ENCODE measurements at regions of chr4 and their contacts with region 1.

Region 1: GRCh38 chr4:25913851-25914669 is at the start of gene SMIM20:
- DNase-seq: peak; percentile 69 to 96
- H3K4me3 ChIP-seq: peak within 1 kb of the TSS; percentile 70 to 74
- H3K27ac ChIP-seq: peak within 1 kb of the TSS; percentile 83 to 84
- H3K4me1 ChIP-seq: peaks cover 0 to 9% of the 10 kb centered on the region in 2 donors
- H3K27me3 ChIP-seq: no peaks in the 10 kb centered on the region
- CTCF ChIP-seq: no peak
- total RNA-seq, gene SMIM20: 5.7 TPM

Region 2: DNA sequence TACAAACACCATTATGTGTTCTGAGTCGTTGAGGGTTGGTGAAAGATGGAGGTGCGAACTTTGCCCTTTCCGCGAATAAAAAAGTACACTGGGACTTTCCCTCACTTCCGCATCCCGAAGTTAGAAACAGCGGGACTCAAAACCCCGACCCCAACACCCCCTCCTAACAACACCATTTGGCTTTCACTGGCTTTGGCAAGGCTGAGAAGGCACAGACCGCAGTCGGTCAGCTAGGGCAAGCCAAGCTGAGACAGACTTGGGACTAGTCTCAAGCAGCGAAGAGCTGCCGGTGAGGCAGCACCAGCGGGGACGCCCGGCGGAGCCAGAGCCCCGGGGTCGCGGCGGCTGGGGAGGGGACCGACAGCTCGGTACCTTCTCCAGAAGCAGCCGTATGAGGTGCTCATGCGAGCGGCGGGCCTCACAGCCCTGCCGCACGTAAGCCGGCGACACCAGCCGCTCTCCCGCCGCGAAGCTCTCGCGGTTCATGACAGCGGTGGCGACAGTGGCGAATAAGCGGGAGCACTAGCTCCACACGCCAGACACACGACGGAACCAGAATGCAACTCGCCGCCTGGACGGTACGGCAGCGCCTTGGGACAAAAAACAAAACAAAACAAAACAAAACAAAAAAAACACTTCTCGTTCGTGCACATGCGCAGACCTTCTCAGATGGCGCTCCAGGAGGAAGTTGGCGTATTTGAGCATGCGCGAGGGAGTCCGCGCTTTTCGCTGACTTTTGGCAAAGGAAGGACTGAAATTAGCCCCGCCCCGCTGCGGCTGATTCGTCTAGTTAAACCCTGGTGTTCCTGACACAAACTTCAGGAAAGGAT is 754.0 kb before region 1 on chr4 and contains the start of gene SEPSECS:
- intact Hi-C with region 1: loop called (anchors 10 kb)
- DNase-seq: peak; percentile 90 to 98
- H3K4me3 ChIP-seq: peak within 1 kb of the TSS; percentile 76 to 86
- H3K27ac ChIP-seq: peak within 1 kb of the TSS; percentile 95 to 97
- H3K4me1 ChIP-seq: peaks cover 3 to 15% of the 10 kb centered on the region in 2 donors
- H3K27me3 ChIP-seq: no peaks in the 10 kb centered on the region
- CTCF ChIP-seq: no peak
- total RNA-seq, gene SEPSECS: 5.2 TPM

Region 3: GRCh38 chr4:25376754-25377571 is 537.1 kb before region 1 on chr4 and contains the start of gene ANAPC4:
- intact Hi-C with region 1: loop called (anchors 2 kb)
- DNase-seq: peak; percentile 83 to 95
- H3K4me3 ChIP-seq: peak within 1 kb of the TSS; percentile 79 to 94
- H3K27ac ChIP-seq: peak within 1 kb of the TSS; percentile 71 to 85
- H3K4me1 ChIP-seq: peaks cover 0 to 3% of the 10 kb centered on the region in 2 donors
- H3K27me3 ChIP-seq: no peaks in the 10 kb centered on the region
- CTCF ChIP-seq: peak in 1 of 3 experiments; percentile 3
- total RNA-seq, gene ANAPC4: 23.4 TPM

Region 4: GRCh38 chr4:25727711-25728493 is 186.2 kb before region 1 on chr4:
- intact Hi-C with region 1: no loop called
- DNase-seq: no peak
- H3K4me3 ChIP-seq: no peak overlapping the region
- H3K27ac ChIP-seq: no peak overlapping the region
- H3K4me1 ChIP-seq: no peaks in the 10 kb centered on the region
- H3K27me3 ChIP-seq: no peaks in the 10 kb centered on the region
- CTCF ChIP-seq: no peak

Region 5: DNA sequence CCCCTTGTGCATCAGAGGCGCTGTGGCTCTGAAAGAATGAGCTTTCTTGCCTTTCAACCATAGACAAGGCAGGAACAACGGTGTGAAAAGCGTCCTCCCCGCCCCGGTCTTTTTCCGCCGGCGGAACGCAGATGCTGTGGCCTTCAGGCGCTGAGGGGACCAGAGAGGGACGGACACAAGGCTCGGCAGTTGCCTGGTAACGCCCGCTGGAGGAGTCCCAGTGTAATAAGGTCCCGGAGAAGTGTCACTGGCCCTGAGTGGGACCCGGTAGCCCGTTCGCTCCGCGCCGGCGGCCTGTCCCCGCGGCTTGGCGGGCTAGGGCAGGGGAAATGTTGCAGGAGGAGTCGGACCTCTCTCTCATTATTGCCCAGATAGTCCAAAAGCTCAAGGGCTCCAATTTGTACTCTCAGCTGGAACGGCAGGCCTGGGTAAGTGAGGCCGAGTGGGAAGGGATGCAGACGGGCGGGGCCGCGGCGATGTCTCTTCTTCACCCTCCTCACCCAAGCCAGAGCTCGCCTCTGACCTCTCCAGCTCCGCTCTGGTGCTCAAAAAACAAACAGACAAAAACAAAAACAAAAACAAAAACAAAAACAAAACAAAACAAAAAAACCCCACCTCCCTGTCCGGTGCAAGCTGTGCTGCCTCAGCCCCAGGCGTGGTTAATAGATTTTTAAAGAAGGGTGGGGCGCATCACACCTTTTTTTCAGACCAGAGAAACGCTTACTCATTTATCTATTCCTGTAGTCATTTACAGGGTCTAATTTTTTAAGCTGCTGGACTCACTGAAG is 670.0 kb after region 1 on chr4 and contains the start of gene TBC1D19:
- intact Hi-C with region 1: loop called (anchors 10 kb)
- DNase-seq: peak; percentile 53 to 91
- H3K4me3 ChIP-seq: peak within 1 kb of the TSS; percentile 73 to 94
- H3K27ac ChIP-seq: peak within 1 kb of the TSS; percentile 60 to 63
- H3K4me1 ChIP-seq: peaks cover 0 to 2% of the 10 kb centered on the region in 2 donors
- H3K27me3 ChIP-seq: no peaks in the 10 kb centered on the region
- CTCF ChIP-seq: no peak
- total RNA-seq, gene TBC1D19: 18.1 TPM

Region 6: DNA sequence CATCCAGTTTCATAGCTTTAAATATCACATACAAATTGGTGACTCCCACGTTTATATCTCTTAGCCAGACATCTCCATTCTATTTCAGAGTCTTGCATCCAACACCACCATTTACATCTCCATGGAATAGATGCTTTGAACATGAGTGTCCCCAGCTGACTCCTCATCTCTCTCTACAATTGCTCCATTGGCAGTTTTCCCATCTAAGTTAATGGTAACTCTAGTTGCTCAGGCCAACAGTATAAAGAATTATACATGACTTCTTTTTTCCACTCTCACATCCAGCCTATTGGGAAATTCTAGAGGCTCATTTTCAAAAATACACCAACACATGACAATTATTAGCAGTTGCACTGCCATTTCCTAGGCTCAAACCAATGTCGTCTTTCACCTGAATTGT is 1334.8 kb after region 1 on chr4:
- intact Hi-C with region 1: loop called (anchors 10 kb)
- DNase-seq: peak in 1 of 2 donors; percentile 64
- H3K4me3 ChIP-seq: no peak overlapping the region
- H3K27ac ChIP-seq: peak overlapping the region; percentile 80 to 90
- H3K4me1 ChIP-seq: peaks cover 6 to 25% of the 10 kb centered on the region in 2 donors
- H3K27me3 ChIP-seq: no peaks in the 10 kb centered on the region
- CTCF ChIP-seq: no peak